HepG2 (cell line): ENCODE measurements at regions of chr16 and their contacts with region 1.

Region 1: GRCh38 chr16:11255737-11256660 is at the start of gene SOCS1:
- DNase-seq: peak; percentile 78
- ATAC-seq: peak; percentile 69
- H3K4me3 ChIP-seq: peak within 1 kb of the TSS; percentile 87 to 98 (median 95)
- H3K27ac ChIP-seq: peak within 1 kb of the TSS; percentile 93
- H3K4me1 ChIP-seq: peaks cover 83% of the 10 kb centered on the region
- H3K27me3 ChIP-seq: no peaks in the 10 kb centered on the region; a peak in 2 of 5 replicates
- CTCF ChIP-seq: peak; percentile 81
- EP300 ChIP-seq: 0 out of 4 replicates have a peak, but pooled peaks of 1 of the 2 experiments have one; percentile 16
- POLR2A ChIP-seq: peak in 1 of 2 experiments; percentile 99; a peak in 2 of 4 replicates
- RAD21 ChIP-seq: peak; percentile 99
- total RNA-seq, gene SOCS1: 3.3 and 5.3 TPM in 2 replicates

Region 2: DNA sequence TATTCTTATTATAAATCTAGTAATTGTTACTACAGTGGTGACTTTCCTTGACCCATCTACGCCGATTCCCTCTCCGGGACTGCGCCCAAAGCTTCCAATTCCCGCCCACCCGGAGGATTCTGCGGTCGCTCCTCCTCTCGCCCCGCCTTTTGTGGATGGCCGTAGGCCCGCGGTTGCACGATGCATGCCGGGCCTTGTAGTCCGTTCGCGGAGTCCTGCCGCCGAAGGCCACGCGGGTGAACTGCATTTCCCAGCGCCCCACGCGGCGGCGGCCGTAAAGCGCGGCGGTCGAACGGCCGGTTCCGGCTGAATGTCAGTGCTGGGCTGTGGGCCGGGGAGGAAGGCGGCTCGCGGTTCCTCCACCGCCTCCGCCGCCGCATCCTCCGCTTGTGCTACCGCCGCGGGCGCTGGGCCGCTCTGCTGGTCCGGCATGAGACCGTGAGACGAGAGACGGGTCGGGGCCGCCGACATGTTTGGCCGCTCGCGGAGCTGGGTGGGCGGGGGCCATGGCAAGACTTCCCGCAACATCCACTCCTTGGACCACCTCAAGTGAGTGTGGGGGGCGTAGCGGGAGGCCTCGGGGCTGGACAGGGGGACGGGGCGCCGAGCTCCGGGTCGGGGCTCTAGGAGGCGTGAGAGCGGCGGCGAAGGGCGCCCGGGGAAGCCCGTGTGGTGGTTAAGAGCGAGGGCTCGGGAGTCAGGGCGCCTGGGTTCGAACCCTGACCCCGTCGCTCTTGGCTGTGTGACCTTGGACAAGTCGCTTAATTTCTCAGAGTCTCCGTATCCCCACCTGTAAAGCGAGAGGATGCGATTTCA is 311.5 kb before region 1 on chr16 and contains the start of gene CLEC16A:
- CTCF ChIA-PET with region 1: no interaction called
- POLR2A ChIA-PET with region 1: interaction called, 19 read pairs
- in situ Hi-C with region 1: no loop called
- intact Hi-C with region 1: no loop called
- DNase-seq: peak; percentile 97
- ATAC-seq: peak; percentile 83
- H3K4me3 ChIP-seq: peak within 1 kb of the TSS; percentile 91 to 93 (median 92)
- H3K27ac ChIP-seq: peak within 1 kb of the TSS; percentile 24
- H3K4me1 ChIP-seq: peaks cover 52% of the 10 kb centered on the region
- H3K27me3 ChIP-seq: no peaks in the 10 kb centered on the region; a peak in 1 of 5 replicates
- CTCF ChIP-seq: peak; percentile 28
- EP300 ChIP-seq: peak in 1 of 2 experiments; percentile 61; a peak in 2 of 4 replicates
- POLR2A ChIP-seq: peak; percentile 71 to 72
- RAD21 ChIP-seq: peak; percentile 70; the same call in 1 of the 2 replicates
- total RNA-seq, gene CLEC16A: 10.3 and 13.6 TPM in 2 replicates

Region 3: GRCh38 chr16:11105038-11105903 is 150.7 kb before region 1 on chr16:
- CTCF ChIA-PET with region 1: no interaction called
- POLR2A ChIA-PET with region 1: interaction called, 10 read pairs
- in situ Hi-C with region 1: no loop called
- intact Hi-C with region 1: no loop called
- DNase-seq: peak; percentile 90
- ATAC-seq: peak; percentile 78
- H3K4me3 ChIP-seq: no peak overlapping the region
- H3K27ac ChIP-seq: no peak overlapping the region
- H3K4me1 ChIP-seq: peaks cover 45% of the 10 kb centered on the region
- H3K27me3 ChIP-seq: no peaks in the 10 kb centered on the region
- CTCF ChIP-seq: no peak
- EP300 ChIP-seq: 0 out of 4 replicates have a peak, but pooled peaks of 1 of the 2 experiments have one; percentile 13
- POLR2A ChIP-seq: no peak
- RAD21 ChIP-seq: no peak

Region 4: GRCh38 chr16:11240636-11241473 is 15.1 kb before region 1 on chr16:
- CTCF ChIA-PET with region 1: no interaction called
- POLR2A ChIA-PET with region 1: interaction called, 20 read pairs
- in situ Hi-C with region 1: no loop called
- intact Hi-C with region 1: no loop called
- DNase-seq: no peak
- ATAC-seq: peak; percentile 52
- H3K4me3 ChIP-seq: peak overlapping the region in 1 of 3 experiments; percentile 45; a peak in 3 of 6 replicates
- H3K27ac ChIP-seq: no peak overlapping the region
- H3K4me1 ChIP-seq: peaks cover 41% of the 10 kb centered on the region
- H3K27me3 ChIP-seq: peaks cover 1 to 28% of the 10 kb centered on the region in 2 experiments; a peak in 3 of 5 replicates
- CTCF ChIP-seq: no peak
- EP300 ChIP-seq: no peak
- POLR2A ChIP-seq: no peak
- RAD21 ChIP-seq: no peak

Region 5: DNA sequence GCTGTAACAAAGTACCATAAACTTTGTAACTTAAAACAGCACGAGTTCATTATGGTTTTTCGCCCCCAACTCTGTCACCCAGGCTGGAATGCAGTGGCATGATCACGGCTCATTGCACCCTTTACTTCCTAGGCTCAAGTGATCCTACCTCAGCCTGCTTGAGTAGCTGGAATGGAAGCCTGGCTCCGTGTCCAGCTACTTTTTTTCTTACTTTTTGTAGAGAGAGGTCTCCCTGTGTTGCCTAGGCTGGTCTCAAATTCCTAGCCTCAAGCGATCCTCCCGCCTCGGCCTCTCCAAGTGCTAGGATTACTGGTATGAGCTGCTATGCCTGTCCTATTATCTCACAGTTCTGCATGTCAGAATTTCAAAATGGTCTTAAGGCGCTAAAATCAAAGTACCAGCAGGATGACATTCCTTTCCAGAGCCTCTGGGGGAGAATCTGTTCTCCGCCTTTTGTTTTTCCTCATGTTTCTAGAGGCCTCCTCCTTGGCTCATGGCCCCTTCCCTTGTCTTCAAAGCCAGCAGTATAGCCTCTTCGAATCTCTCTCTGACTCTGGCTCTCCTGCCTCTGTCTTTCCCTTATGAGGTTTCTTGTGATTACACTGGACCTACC is 35.2 kb after region 1 on chr16:
- CTCF ChIA-PET with region 1: no interaction called
- POLR2A ChIA-PET with region 1: interaction called, 167 read pairs
- in situ Hi-C with region 1: no loop called
- intact Hi-C with region 1: loop called (anchors 5 kb)
- DNase-seq: no peak
- ATAC-seq: no peak
- H3K4me3 ChIP-seq: no peak overlapping the region
- H3K27ac ChIP-seq: no peak overlapping the region
- H3K4me1 ChIP-seq: peaks cover 90% of the 10 kb centered on the region
- H3K27me3 ChIP-seq: no peaks in the 10 kb centered on the region
- CTCF ChIP-seq: no peak
- EP300 ChIP-seq: no peak
- POLR2A ChIP-seq: no peak
- RAD21 ChIP-seq: no peak

Region 6: GRCh38 chr16:11333711-11334110 is 77.7 kb after region 1 on chr16:
- CTCF ChIA-PET with region 1: no interaction called
- POLR2A ChIA-PET with region 1: interaction called, 24 read pairs
- in situ Hi-C with region 1: no loop called
- intact Hi-C with region 1: no loop called
- DNase-seq: no peak
- ATAC-seq: peak; percentile 62
- H3K4me3 ChIP-seq: no peak overlapping the region
- H3K27ac ChIP-seq: no peak overlapping the region
- H3K4me1 ChIP-seq: peaks cover 54% of the 10 kb centered on the region
- H3K27me3 ChIP-seq: no peaks in the 10 kb centered on the region
- CTCF ChIP-seq: no peak
- EP300 ChIP-seq: no peak
- POLR2A ChIP-seq: no peak
- RAD21 ChIP-seq: no peak

Region 7: GRCh38 chr16:11361701-11362451 is 105.9 kb after region 1 on chr16:
- CTCF ChIA-PET with region 1: interaction called, 38 read pairs
- POLR2A ChIA-PET with region 1: interaction called, 54 read pairs
- in situ Hi-C with region 1: no loop called
- intact Hi-C with region 1: no loop called
- DNase-seq: no peak
- ATAC-seq: no peak
- H3K4me3 ChIP-seq: no peak overlapping the region
- H3K27ac ChIP-seq: no peak overlapping the region
- H3K4me1 ChIP-seq: peaks cover 88% of the 10 kb centered on the region
- H3K27me3 ChIP-seq: no peaks in the 10 kb centered on the region
- CTCF ChIP-seq: no peak
- EP300 ChIP-seq: no peak
- POLR2A ChIP-seq: no peak
- RAD21 ChIP-seq: no peak